ENCODE measurements at regions of chr5 and their contacts with region 1.

Region 1: DNA sequence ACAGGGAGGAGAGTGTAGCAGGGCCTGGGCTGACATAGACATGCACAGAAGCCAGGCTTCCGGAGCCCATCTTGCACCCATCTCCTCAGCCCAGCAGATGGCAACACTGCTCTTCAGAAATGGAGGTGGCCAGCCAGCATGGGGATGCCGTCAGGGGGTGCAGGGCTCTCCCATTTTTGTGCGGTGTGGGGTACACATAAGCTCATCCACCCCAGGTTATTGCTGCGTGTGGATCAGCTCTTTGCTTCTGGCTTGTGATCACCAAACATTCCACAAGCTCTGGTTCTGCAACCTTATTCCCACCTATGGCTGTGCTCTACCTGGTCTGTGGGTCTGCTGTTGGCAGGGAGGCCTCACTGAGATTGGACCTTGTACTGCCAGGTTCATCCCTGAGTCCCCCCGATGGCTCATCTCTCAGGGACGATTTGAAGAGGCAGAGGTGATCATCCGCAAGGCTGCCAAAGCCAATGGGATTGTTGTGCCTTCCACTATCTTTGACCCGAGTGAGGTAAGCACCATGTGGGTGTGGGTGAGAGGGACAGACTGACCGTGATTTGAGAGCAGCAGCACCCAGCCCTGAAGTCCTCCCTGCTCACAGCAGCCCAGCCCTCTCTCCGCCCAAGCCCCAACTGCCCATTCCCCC is 17.3 kb downstream of the SLC22A5 start:
- DNase-seq: peak; percentile 87
- ATAC-seq: peak; percentile 92
- H3K4me3 Mint-ChIP-seq: no peak overlapping the region
- H3K27ac Mint-ChIP-seq: peak overlapping the region; percentile 25
- H3K4me1 Mint-ChIP-seq: peaks cover 40% of the 10 kb centered on the region
- H3K27me3 Mint-ChIP-seq: no peaks in the 10 kb centered on the region
- CTCF ChIP-seq: peak; percentile 91

Region 2: GRCh38 chr5:131906668-131907067 is 480.1 kb before region 1 on chr5:
- CTCF ChIA-PET with region 1: no interaction called
- POLR2A ChIA-PET with region 1: no interaction called
- intact Hi-C with region 1: no loop called
- DNase-seq: no peak
- ATAC-seq: no peak
- H3K4me3 Mint-ChIP-seq: no peak overlapping the region
- H3K27ac Mint-ChIP-seq: no peak overlapping the region
- H3K4me1 Mint-ChIP-seq: peaks cover 15% of the 10 kb centered on the region
- H3K27me3 Mint-ChIP-seq: no peaks in the 10 kb centered on the region
- CTCF ChIP-seq: no peak

Region 3: GRCh38 chr5:132369474-132370180 is 17.1 kb before region 1 on chr5 and contains the start of gene SLC22A5:
- CTCF ChIA-PET with region 1: interaction called, 19 read pairs
- POLR2A ChIA-PET with region 1: interaction called, 6 read pairs
- intact Hi-C with region 1: no loop called
- DNase-seq: peak; percentile 73
- ATAC-seq: peak; percentile 96
- H3K4me3 Mint-ChIP-seq: peak within 1 kb of the TSS; percentile 82
- H3K27ac Mint-ChIP-seq: peak within 1 kb of the TSS; percentile 84
- H3K4me1 Mint-ChIP-seq: peaks cover 28% of the 10 kb centered on the region
- H3K27me3 Mint-ChIP-seq: no peaks in the 10 kb centered on the region
- CTCF ChIP-seq: no peak
- total RNA-seq, gene SLC22A5: 4.0 to 4.1 TPM

Region 4: DNA sequence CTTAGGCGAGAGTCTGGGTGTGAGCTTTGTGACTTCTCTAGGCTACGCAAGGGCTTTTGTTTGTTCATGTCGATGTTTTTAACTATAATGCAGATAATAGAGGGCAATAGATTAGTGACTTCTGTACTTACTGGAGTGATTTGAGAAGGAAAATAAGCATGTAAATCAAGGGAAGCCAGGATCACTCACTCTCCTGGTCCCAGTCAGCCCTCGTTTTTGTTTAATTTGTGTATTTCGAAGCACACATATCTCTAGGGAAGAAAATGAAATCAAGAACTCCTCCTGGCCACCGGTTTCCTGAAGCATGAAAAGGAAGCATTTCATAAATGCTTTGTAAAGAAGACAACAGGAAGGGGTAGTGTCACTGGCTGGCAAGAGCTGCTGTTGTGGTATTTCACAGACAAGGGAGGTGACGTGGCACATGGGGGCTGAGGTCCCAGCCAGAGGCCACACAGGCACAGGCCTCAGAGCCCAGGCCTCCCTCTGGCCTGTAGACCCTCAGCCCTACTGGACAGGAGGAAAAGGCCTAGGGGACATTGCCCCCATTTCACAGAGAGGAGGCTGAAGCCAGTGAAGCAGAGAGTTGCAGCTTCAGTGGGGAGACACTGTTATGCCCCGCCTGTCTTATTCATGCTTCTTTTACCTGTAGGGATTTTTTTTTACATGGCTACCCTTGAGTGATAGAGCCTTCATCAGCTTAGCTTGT is 69.7 kb after region 1 on chr5:
- CTCF ChIA-PET with region 1: interaction called, 13 read pairs
- POLR2A ChIA-PET with region 1: no interaction called
- intact Hi-C with region 1: no loop called
- DNase-seq: peak; percentile 79
- ATAC-seq: peak; percentile 59
- H3K4me3 Mint-ChIP-seq: peak overlapping the region; percentile 38
- H3K27ac Mint-ChIP-seq: peak overlapping the region; percentile 94
- H3K4me1 Mint-ChIP-seq: peaks cover 85% of the 10 kb centered on the region
- H3K27me3 Mint-ChIP-seq: no peaks in the 10 kb centered on the region
- CTCF ChIP-seq: no peak

Region 5: DNA sequence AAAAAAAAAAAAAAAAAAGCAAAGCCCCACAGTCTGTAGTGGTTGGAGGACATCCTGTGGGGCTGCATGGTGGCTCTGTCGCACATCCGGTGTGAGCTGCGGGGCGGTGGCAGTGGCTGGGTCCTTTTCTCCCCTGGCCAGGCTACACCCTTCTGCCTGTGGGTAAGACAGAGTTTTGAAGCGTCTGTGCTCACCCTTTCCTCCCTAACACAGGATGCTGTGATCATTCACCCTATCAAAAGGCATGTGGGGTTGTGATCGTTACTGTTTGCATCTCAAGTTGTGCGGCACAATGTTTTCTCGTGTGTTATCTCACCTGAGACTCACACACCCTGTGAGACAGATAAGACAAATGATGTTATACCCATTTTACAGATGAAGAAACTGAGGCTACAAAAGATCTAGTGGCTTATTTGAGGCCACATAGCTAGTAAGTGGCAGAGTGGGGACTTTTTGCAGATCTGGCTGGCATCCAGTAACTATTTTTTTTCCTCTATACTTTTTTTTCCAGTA is 86.3 kb after region 1 on chr5:
- CTCF ChIA-PET with region 1: interaction called, 22 read pairs
- POLR2A ChIA-PET with region 1: interaction called, 68 read pairs
- intact Hi-C with region 1: no loop called
- DNase-seq: peak; percentile 91
- ATAC-seq: peak; percentile 94
- H3K4me3 Mint-ChIP-seq: no peak overlapping the region
- H3K27ac Mint-ChIP-seq: peak overlapping the region; percentile 78
- H3K4me1 Mint-ChIP-seq: peaks cover 72% of the 10 kb centered on the region
- H3K27me3 Mint-ChIP-seq: no peaks in the 10 kb centered on the region
- CTCF ChIP-seq: no peak

Region 6: DNA sequence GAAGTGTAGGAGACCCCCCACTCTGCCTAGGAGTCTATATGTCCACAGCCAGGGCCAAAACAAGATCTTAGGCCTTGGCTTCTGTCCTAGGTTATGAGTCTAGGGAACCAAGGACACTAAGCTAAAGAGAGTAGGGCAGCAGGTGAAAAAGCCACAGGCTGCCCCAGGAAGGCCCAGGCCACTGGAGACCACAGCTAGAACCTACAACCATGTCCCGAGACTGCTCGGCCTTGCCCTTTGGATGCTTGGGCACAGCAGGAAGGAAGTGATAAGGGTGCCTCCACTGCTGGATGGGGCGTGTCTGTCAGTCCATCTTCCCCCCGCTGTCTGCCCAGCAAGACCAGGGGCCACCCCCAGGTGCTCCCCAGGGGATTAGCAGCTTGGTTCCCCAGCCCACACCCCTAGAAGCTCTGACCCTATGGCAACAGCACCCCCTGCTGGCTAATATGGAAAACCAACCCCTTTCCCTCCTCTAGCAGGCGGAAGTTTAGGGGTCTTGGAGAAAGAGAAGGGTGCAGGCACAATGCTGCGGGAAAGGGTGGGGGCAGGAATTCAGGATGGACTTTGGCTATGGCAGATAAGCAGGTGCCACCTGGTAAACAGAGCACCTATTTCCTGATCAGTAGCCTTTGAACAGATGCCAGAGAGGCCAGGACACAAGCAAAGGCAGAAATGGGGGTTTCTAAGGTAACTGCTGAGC is 114.3 kb after region 1 on chr5:
- CTCF ChIA-PET with region 1: interaction called, 342 read pairs
- POLR2A ChIA-PET with region 1: interaction called, 16 read pairs
- intact Hi-C with region 1: loop called (anchors 1 kb)
- DNase-seq: peak; percentile 83
- ATAC-seq: peak; percentile 40
- H3K4me3 Mint-ChIP-seq: no peak overlapping the region
- H3K27ac Mint-ChIP-seq: peak overlapping the region; percentile 71
- H3K4me1 Mint-ChIP-seq: peaks cover 36% of the 10 kb centered on the region
- H3K27me3 Mint-ChIP-seq: peaks cover under 1% of the 10 kb centered on the region
- CTCF ChIP-seq: peak; percentile 89